ENCODE measurements at regions of chr20 and their contacts with region 1.

Region 1: GRCh38 chr20:37406010-37406998 is 60.4 kb downstream of the SRC start:
- DNase-seq: peak in 1 of 2 experiments; percentile 53
- H3K4me3 ChIP-seq: peak overlapping the region; percentile 49; the same call in 1 of the 2 replicates
- H3K27ac ChIP-seq: no peak overlapping the region
- H3K4me1 ChIP-seq: no peaks in the 10 kb centered on the region
- H3K27me3 ChIP-seq: peaks cover 34% of the 10 kb centered on the region
- CTCF ChIP-seq: no peak

Region 2: GRCh38 chr20:37335642-37336368 is 70.5 kb before region 1 on chr20:
- CTCF ChIA-PET with region 1: interaction called, 10 read pairs
- POLR2A ChIA-PET with region 1: no interaction called
- intact Hi-C with region 1: no loop called
- DNase-seq: no peak
- H3K4me3 ChIP-seq: no peak overlapping the region
- H3K27ac ChIP-seq: no peak overlapping the region
- H3K4me1 ChIP-seq: peaks cover 22% of the 10 kb centered on the region
- H3K27me3 ChIP-seq: no peaks in the 10 kb centered on the region
- CTCF ChIP-seq: no peak